IMR-90 (cell line): ENCODE measurements at regions of chr10 and their contacts with region 1.

Region 1: DNA sequence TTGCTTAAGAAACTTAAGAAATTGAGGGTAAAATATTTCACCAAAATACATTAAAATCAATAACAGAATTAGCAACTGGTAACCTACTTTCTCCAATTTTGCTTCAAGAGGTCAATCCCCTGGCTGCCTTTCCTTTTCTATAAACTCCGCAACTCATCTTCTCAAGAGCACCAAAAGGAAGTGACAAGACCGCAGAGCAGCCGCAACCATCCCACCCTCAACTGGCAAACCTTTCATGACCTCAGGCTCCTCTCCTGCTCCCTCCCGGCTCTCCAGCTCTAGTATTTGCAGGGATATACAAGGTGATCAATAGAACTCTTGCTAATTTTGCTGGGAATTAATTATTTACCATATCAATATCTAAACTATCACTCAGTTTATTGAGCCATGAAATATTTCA is 88.9 kb downstream of the ATE1 start:
- DNase-seq: no peak
- ATAC-seq: no peak
- H3K4me3 ChIP-seq: no peak overlapping the region
- H3K27ac ChIP-seq: no peak overlapping the region
- H3K4me1 ChIP-seq: no peaks in the 10 kb centered on the region
- H3K27me3 ChIP-seq: no peaks in the 10 kb centered on the region
- CTCF ChIP-seq: no peak
- POLR2A ChIP-seq: no peak
- RAD21 ChIP-seq: no peak

Region 2: GRCh38 chr10:121309164-121309563 is 529.8 kb before region 1 on chr10:
- CTCF ChIA-PET with region 1: no interaction called
- POLR2A ChIA-PET with region 1: no interaction called
- dilution Hi-C with region 1: no loop called
- in situ Hi-C with region 1: no loop called
- intact Hi-C with region 1: loop called (anchors 5 kb)
- DNase-seq: no peak
- ATAC-seq: no peak
- H3K4me3 ChIP-seq: no peak overlapping the region
- H3K27ac ChIP-seq: no peak overlapping the region
- H3K4me1 ChIP-seq: no peaks in the 10 kb centered on the region
- H3K27me3 ChIP-seq: no peaks in the 10 kb centered on the region
- CTCF ChIP-seq: no peak
- POLR2A ChIP-seq: no peak
- RAD21 ChIP-seq: no peak

Region 3: GRCh38 chr10:121851786-121852185 is 12.9 kb after region 1 on chr10:
- CTCF ChIA-PET with region 1: interaction called, 3 read pairs
- POLR2A ChIA-PET with region 1: no interaction called
- dilution Hi-C with region 1: no loop called
- in situ Hi-C with region 1: no loop called
- intact Hi-C with region 1: loop called (anchors 1 kb)
- DNase-seq: no peak
- ATAC-seq: no peak
- H3K4me3 ChIP-seq: no peak overlapping the region
- H3K27ac ChIP-seq: no peak overlapping the region
- H3K4me1 ChIP-seq: no peaks in the 10 kb centered on the region
- H3K27me3 ChIP-seq: no peaks in the 10 kb centered on the region
- CTCF ChIP-seq: no peak
- POLR2A ChIP-seq: no peak
- RAD21 ChIP-seq: no peak

Region 4: GRCh38 chr10:121927841-121928527 is 89.1 kb after region 1 on chr10 and contains the start of gene ATE1:
- CTCF ChIA-PET with region 1: no interaction called
- POLR2A ChIA-PET with region 1: no interaction called
- dilution Hi-C with region 1: no loop called
- in situ Hi-C with region 1: no loop called
- intact Hi-C with region 1: no loop called
- DNase-seq: peak; percentile 88
- ATAC-seq: peak; percentile 95
- H3K4me3 ChIP-seq: peak within 1 kb of the TSS; percentile 91
- H3K27ac ChIP-seq: peak within 1 kb of the TSS; percentile 98
- H3K4me1 ChIP-seq: no peaks in the 10 kb centered on the region
- H3K27me3 ChIP-seq: no peaks in the 10 kb centered on the region
- CTCF ChIP-seq: no peak; the same call in 1 of the 2 replicates
- POLR2A ChIP-seq: peak; percentile 85
- RAD21 ChIP-seq: no peak
- total RNA-seq, gene ATE1: 21.9 and 27.8 TPM in 2 replicates